A549 (cell line): ENCODE measurements at regions of chr14 and their contacts with region 1.

Region 1: GRCh38 chr14:23327947-23328744 is 6.9 kb downstream of the PABPN1 start:
- DNase-seq: peak; percentile 79 to 85
- ATAC-seq: peak; percentile 82 to 84
- H3K4me3 ChIP-seq: no peak overlapping the region
- H3K27ac ChIP-seq: no peak overlapping the region
- H3K4me1 ChIP-seq: peaks cover 10% of the 10 kb centered on the region
- CTCF ChIP-seq: peak; percentile 91
- EP300 ChIP-seq: no peak
- POLR2A ChIP-seq: no peak
- RAD21 ChIP-seq: peak; percentile 78 to 89

Region 2: DNA sequence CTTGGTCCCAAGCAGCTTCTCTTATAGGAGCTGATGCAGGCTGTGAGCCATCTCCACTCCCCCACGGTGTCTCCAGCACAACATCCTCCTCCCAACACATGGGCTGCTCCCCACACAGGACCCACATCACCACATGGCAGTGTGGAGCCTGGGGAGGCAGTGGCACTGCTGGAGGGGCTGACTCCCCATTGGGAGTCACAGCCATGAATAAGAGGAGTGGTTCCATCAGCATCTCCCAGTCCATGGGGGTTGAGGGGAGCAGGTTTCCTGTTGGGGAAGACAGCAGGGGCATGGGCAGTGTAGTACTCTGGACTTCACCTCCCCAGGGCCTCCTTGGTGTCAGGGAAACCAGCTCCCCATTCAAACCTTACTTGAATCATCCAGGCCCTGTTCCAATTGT is 602.1 kb before region 1 on chr14:
- CTCF ChIA-PET with region 1: no interaction called
- POLR2A ChIA-PET with region 1: no interaction called
- DNase-seq: no peak
- ATAC-seq: no peak; a peak in 1 of 6 replicates
- H3K4me3 ChIP-seq: no peak overlapping the region
- H3K27ac ChIP-seq: no peak overlapping the region
- H3K4me1 ChIP-seq: no peaks in the 10 kb centered on the region
- CTCF ChIP-seq: no peak
- EP300 ChIP-seq: no peak
- POLR2A ChIP-seq: no peak
- RAD21 ChIP-seq: no peak

Region 3: DNA sequence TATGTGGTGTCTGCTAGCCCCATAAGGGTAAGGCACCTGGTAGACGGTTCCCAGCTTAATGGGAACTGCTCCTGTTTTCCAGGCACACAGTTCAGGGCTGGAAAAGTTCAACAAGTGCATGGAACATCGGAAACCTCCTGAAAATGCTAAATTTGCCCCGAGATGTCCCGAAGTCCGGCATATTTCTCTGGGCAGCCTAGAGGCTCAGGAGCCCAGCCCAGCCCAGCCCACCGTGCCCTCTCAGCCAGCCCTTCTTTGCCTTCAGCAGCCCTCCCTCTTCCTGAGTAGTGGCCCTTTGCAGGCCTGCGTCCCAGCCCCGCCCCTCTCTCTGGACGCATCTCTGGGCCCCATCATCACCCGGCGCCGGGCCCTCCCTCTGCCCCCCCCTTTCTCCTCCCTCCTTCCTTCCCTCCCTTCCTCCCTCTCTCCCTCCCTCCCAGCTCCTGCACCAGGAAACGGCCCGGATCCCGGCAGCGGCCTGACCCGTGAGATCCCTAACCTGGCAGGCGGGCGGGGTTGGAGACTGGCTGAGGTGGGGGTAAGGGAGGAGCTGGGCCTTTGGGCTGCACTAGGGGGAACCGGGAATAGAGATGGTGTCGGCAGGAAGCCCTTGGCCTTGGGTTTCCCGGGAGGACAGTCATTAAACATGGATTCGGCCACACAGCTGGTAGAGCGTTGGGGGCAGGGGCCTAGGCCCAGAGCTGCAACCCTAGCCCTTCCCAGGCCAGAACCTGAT is 21.6 kb before region 1 on chr14 and contains the start of gene BCL2L2:
- CTCF ChIA-PET with region 1: interaction called, 22 read pairs
- POLR2A ChIA-PET with region 1: no interaction called
- DNase-seq: peak; percentile 66 to 92
- ATAC-seq: peak; percentile 66 to 78
- H3K4me3 ChIP-seq: peak within 1 kb of the TSS; percentile 74
- H3K27ac ChIP-seq: peak within 1 kb of the TSS; percentile 95 to 96
- H3K4me1 ChIP-seq: peaks cover 29% of the 10 kb centered on the region
- CTCF ChIP-seq: no peak
- EP300 ChIP-seq: no peak
- POLR2A ChIP-seq: peak; percentile 71
- RAD21 ChIP-seq: no peak
- polyA plus RNA-seq, gene BCL2L2: 17.8 and 20.8 TPM in 2 replicates

Region 4: DNA sequence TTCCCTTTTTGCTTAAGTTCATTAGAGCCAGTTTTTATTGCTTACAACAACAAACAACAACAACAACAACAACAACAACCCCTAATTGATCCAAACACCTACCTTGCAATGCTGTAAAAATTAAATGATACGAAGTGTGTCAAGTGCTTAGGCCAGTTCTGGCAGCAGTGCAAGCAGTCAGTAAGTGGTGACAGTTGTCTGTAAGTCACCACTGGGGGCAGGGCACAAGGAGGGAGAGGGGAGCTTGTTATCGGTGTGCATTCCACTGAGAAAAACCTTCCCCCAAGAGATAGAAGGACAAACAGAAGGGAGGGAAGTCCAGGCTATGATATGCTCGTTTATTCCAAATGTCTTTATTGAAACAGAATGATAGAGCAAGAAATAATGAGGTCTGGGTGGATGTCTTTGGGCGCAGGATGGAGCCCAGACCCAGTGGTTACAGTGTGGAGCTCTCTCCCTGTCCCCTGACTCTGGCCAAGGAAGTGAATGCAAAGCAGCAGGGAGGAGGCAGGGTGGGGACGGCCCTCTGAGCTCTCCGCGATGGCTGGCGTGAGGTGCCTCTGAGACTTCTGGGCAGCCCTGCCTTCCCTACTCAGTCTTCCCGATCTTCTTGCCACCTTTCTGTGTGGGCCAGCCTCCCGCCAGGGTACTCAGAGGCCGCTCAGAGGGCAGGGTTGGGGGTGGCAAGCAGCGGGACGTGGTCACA is 18.0 kb after region 1 on chr14:
- CTCF ChIA-PET with region 1: interaction called, 20 read pairs
- POLR2A ChIA-PET with region 1: interaction called, 4 read pairs
- DNase-seq: no peak
- ATAC-seq: peak in 1 of 2 experiments; percentile 46; a peak in 2 of 6 replicates
- H3K4me3 ChIP-seq: no peak overlapping the region
- H3K27ac ChIP-seq: no peak overlapping the region
- H3K4me1 ChIP-seq: no peaks in the 10 kb centered on the region
- CTCF ChIP-seq: no peak
- EP300 ChIP-seq: no peak
- POLR2A ChIP-seq: no peak
- RAD21 ChIP-seq: no peak

Region 5: GRCh38 chr14:23352511-23353432 is 24.6 kb after region 1 on chr14 and contains the start of gene SLC22A17:
- CTCF ChIA-PET with region 1: interaction called, 10 read pairs
- POLR2A ChIA-PET with region 1: no interaction called
- DNase-seq: peak; percentile 60 to 65
- ATAC-seq: peak; percentile 88 to 96
- H3K4me3 ChIP-seq: peak within 1 kb of the TSS; percentile 52
- H3K27ac ChIP-seq: peak within 1 kb of the TSS; percentile 38 to 83; a peak in 5 of 6 replicates
- H3K4me1 ChIP-seq: 0 out of 3 replicates have a peak, but pooled peaks cover 3% of the 10 kb centered on the region
- CTCF ChIP-seq: no peak
- EP300 ChIP-seq: no peak
- POLR2A ChIP-seq: peak; percentile 84
- RAD21 ChIP-seq: no peak
- polyA plus RNA-seq, gene SLC22A17: 3.5 and 4.6 TPM in 2 replicates

Region 6: DNA sequence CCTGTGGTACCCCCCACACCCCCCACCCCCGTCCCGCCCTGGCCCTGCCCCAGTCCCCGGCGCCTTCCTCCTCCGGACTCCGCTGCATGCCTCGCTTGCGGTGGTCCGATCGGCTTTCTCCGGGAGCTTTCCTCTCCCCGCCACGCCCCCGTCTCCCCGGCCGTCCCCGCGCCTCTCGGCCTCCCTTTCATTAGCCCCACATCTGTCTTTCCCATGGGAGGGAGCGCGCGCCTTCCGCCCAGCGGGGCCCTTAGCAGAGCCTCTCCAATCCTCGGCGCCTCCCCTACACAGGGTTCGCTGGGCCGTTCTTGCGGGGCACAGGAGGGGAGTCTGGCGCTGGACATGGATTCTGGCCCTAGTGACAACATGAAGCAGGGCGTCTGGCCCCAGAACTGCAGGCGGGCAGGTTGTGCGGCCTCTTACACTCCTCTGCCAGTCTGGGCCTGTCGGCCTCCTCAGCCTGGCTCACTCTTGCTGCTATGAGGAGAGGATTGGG is 38.3 kb after region 1 on chr14:
- CTCF ChIA-PET with region 1: interaction called, 28 read pairs
- POLR2A ChIA-PET with region 1: no interaction called
- DNase-seq: no peak
- ATAC-seq: no peak; a peak in 1 of 6 replicates
- H3K4me3 ChIP-seq: no peak overlapping the region
- H3K27ac ChIP-seq: no peak overlapping the region
- H3K4me1 ChIP-seq: no peaks in the 10 kb centered on the region
- CTCF ChIP-seq: no peak
- EP300 ChIP-seq: no peak
- POLR2A ChIP-seq: no peak
- RAD21 ChIP-seq: no peak